Activated B cell treated with CpG ODN at 0.5 μM for 24 hours (primary cell): ENCODE measurements at regions of chr12 and their contacts with region 1.

Region 1: DNA sequence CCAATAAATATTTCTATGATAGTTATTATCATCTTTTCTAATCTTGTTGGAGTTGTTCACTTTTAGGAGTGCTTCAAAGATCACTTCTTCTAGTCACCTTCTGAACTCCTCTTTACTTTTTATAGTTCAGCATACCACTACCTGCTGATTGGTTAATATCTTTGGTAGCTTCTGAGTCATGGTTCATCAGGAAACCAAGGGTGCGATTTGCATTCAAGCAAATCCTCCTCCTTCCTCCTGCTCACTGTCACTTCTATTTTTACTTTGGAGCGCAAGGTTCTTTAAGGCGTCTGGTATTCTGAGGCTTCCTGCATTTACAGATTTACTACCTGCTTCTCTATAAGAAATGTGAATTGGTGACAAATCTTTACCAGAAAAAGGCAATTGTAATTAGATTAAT is 24.0 kb downstream of the SYT1 start:
- DNase-seq: no peak
- ATAC-seq: peak; percentile 95
- H3K4me3 Mint-ChIP-seq: peak overlapping the region; percentile 56
- H3K27ac Mint-ChIP-seq: no peak overlapping the region
- H3K4me1 Mint-ChIP-seq: peaks cover 23% of the 10 kb centered on the region
- H3K27me3 Mint-ChIP-seq: no peaks in the 10 kb centered on the region
- CTCF ChIP-seq: no peak

Region 2: DNA sequence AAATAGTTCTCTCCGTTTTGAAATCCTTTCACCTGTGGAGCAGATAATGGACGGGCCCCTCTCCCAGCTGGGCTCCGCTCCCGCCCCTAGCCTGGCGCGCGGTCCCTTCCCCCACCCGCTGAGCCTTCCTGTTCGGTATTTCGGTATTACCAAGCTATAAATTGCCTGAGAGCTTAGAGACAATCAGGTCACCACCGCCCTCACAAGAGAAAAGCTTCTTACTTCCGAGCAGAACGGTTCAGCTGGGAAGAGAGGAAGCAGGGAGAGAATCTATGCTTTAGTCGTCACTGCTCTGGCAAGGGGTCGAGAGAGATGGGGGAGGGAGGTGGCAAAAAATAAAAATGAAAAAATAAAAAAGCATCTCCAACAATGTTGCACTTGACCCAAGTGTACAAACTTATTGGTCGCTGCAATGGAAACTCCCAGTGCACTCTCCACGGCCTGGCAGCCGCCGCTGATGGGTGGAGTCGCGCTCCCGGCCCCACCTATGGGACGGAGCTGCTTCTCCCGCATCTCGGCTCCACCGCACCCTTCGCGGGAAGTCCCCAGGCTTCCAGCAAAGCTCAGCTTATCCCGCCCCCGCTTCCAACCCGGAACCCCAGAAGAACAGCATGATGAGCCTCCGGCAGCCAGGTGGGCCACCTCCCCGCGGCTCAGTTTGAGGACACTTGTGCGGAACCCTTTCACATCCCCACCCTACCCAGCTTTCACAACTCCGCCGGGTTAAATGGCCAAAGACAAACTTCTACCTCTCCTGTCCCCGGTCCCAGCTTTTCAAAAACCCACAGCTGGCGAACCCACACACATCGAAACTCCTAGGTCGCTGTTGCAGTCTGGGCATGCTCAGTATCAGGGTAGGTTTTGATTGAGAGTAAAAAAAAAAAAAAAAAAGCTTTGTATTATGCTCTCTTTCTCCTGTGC is 24.8 kb before region 1 on chr12:
- CTCF ChIA-PET with region 1: no interaction called
- POLR2A ChIA-PET with region 1: interaction called, 5 read pairs
- intact Hi-C with region 1: loop called (anchors 1 kb)
- DNase-seq: peak; percentile 21
- ATAC-seq: peak; percentile 46
- H3K4me3 Mint-ChIP-seq: peak overlapping the region; percentile 86
- H3K27ac Mint-ChIP-seq: peak overlapping the region; percentile 76
- H3K4me1 Mint-ChIP-seq: peaks cover 23% of the 10 kb centered on the region
- H3K27me3 Mint-ChIP-seq: peaks cover 12% of the 10 kb centered on the region
- CTCF ChIP-seq: no peak

Region 3: GRCh38 chr12:79187032-79187431 is 298.5 kb after region 1 on chr12:
- CTCF ChIA-PET with region 1: no interaction called
- POLR2A ChIA-PET with region 1: no interaction called
- intact Hi-C with region 1: loop called (anchors 10 kb)
- DNase-seq: no peak
- ATAC-seq: no peak
- H3K4me3 Mint-ChIP-seq: no peak overlapping the region
- H3K27ac Mint-ChIP-seq: no peak overlapping the region
- H3K4me1 Mint-ChIP-seq: peaks cover 8% of the 10 kb centered on the region
- H3K27me3 Mint-ChIP-seq: no peaks in the 10 kb centered on the region
- CTCF ChIP-seq: no peak